Heart left ventricle (tissue), 16 donors: ENCODE measurements at regions of chr2 and their contacts with region 1.

Region 1: GRCh38 chr2:46451131-46451711 is 28.1 kb upstream of the TMEM247 start:
- DNase-seq: peak in 1 of 5 donors; percentile 46
- ATAC-seq: peak; percentile 55 to 82 (median 80)
- H3K4me3 ChIP-seq: no peak overlapping the region
- H3K27ac ChIP-seq: peak overlapping the region in 2 of 12 donors; percentile 0 to 19
- H3K4me1 ChIP-seq: peaks cover 0 to 10% (median 0%) of the 10 kb centered on the region in 12 donors
- H3K27me3 ChIP-seq: no peaks in the 10 kb centered on the region
- CTCF ChIP-seq: no peak
- POLR2A ChIP-seq: no peak

Region 2: GRCh38 chr2:46010925-46011490 is 440.2 kb before region 1 on chr2:
- intact Hi-C with region 1: loop called in 2 of 10 experiments (anchors 5 kb)
- DNase-seq: no peak
- ATAC-seq: peak in 3 of 4 donors; percentile 50 to 68 (median 54)
- H3K4me3 ChIP-seq: no peak overlapping the region
- H3K27ac ChIP-seq: no peak overlapping the region
- H3K4me1 ChIP-seq: peaks cover 0 to 27% (median 12%) of the 10 kb centered on the region in 12 donors
- H3K27me3 ChIP-seq: no peaks in the 10 kb centered on the region
- CTCF ChIP-seq: peak; percentile 44 to 81 (median 72)
- POLR2A ChIP-seq: no peak

Region 3: DNA sequence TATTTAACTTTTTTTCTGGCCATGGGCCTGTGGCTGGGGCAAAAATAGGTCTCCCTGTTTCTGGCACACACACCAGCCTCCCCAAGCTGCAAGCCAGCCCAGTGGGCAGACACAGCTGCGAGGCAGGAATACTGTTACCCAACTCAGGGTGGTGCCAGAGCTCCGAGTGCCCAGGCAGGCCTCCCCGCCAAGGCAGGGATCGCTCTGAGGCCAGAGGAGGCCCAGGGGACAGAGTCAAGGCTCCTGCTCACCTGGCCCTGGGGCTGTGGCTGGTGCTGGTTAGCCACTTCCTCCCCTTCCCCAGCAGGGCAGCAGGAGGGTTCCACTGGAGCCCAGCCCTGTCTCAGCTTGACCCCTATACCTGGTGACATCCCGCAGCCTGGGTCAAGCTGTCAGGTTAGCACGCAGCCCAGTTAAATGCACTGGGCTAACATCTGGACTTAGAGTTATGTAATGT is 221.1 kb before region 1 on chr2:
- intact Hi-C with region 1: loop called in 2 of 10 experiments (anchors 10 kb)
- DNase-seq: peak in 4 of 5 donors; percentile 35 to 69 (median 61)
- ATAC-seq: peak; percentile 62 to 92 (median 88)
- H3K4me3 ChIP-seq: no peak overlapping the region
- H3K27ac ChIP-seq: peak overlapping the region in 8 of 12 donors; percentile 3 to 67 (median 42)
- H3K4me1 ChIP-seq: peaks cover 0 to 32% (median 14%) of the 10 kb centered on the region in 12 donors
- H3K27me3 ChIP-seq: no peaks in the 10 kb centered on the region
- CTCF ChIP-seq: peak; percentile 16 to 56 (median 39)
- POLR2A ChIP-seq: no peak

Region 4: GRCh38 chr2:46296840-46297545 is 154.2 kb before region 1 on chr2 and contains the start of gene EPAS1:
- intact Hi-C with region 1: no loop called
- DNase-seq: peak; percentile 97 to 98 (median 98)
- ATAC-seq: peak; percentile 80 to 92 (median 85)
- H3K4me3 ChIP-seq: peak within 1 kb of the TSS; percentile 76 to 99 (median 92)
- H3K27ac ChIP-seq: peak within 1 kb of the TSS; percentile 92 to 100 (median 96)
- H3K4me1 ChIP-seq: peaks cover 0 to 42% (median 18%) of the 10 kb centered on the region in 12 donors
- H3K27me3 ChIP-seq: peaks cover 0 to 13% (median 0%) of the 10 kb centered on the region in 9 donors
- CTCF ChIP-seq: no peak
- POLR2A ChIP-seq: peak; percentile 61 to 98
- total RNA-seq, gene EPAS1: 194 to 790 (median 216) TPM

Region 5: GRCh38 chr2:46329803-46330775 is 121.1 kb before region 1 on chr2:
- intact Hi-C with region 1: no loop called
- DNase-seq: no peak
- ATAC-seq: peak in 1 of 4 donors; percentile 14
- H3K4me3 ChIP-seq: peak overlapping the region in 2 of 12 donors; percentile 9 to 11
- H3K27ac ChIP-seq: peak overlapping the region in 11 of 12 donors; percentile 39 to 90 (median 69)
- H3K4me1 ChIP-seq: peaks cover 31 to 100% (median 97%) of the 10 kb centered on the region in 12 donors
- H3K27me3 ChIP-seq: no peaks in the 10 kb centered on the region
- CTCF ChIP-seq: no peak
- POLR2A ChIP-seq: no peak

Region 6: GRCh38 chr2:46385786-46386577 is 65.2 kb before region 1 on chr2:
- intact Hi-C with region 1: loop called in 4 of 10 experiments (anchors 5 to 10 kb)
- DNase-seq: peak in 1 of 5 donors; percentile 37
- ATAC-seq: peak in 1 of 4 donors; percentile 23
- H3K4me3 ChIP-seq: no peak overlapping the region
- H3K27ac ChIP-seq: peak overlapping the region in 4 of 12 donors; percentile 13 to 67 (median 42)
- H3K4me1 ChIP-seq: peaks cover 0 to 40% (median 7%) of the 10 kb centered on the region in 12 donors
- H3K27me3 ChIP-seq: no peaks in the 10 kb centered on the region
- CTCF ChIP-seq: no peak
- POLR2A ChIP-seq: no peak

Region 7: GRCh38 chr2:46394649-46395510 is 56.3 kb before region 1 on chr2:
- intact Hi-C with region 1: loop called in 3 of 10 experiments (anchors 5 to 10 kb)
- DNase-seq: no peak
- ATAC-seq: no peak
- H3K4me3 ChIP-seq: no peak overlapping the region
- H3K27ac ChIP-seq: no peak overlapping the region
- H3K4me1 ChIP-seq: peaks cover 0 to 4% (median 0%) of the 10 kb centered on the region in 12 donors
- H3K27me3 ChIP-seq: no peaks in the 10 kb centered on the region
- CTCF ChIP-seq: no peak
- POLR2A ChIP-seq: no peak